Calu3 (cell line): ENCODE measurements at regions of chr6 and their contacts with region 1.

Region 1: GRCh38 chr6:50091641-50092040 is 41.9 kb upstream of the DEFB112 start:
- DNase-seq: no peak
- H3K4me3 Mint-ChIP-seq: no peak overlapping the region
- H3K27ac Mint-ChIP-seq: no peak overlapping the region
- H3K4me1 Mint-ChIP-seq: peaks cover 26% of the 10 kb centered on the region
- H3K27me3 Mint-ChIP-seq: no peaks in the 10 kb centered on the region
- CTCF ChIP-seq: no peak

Region 2: DNA sequence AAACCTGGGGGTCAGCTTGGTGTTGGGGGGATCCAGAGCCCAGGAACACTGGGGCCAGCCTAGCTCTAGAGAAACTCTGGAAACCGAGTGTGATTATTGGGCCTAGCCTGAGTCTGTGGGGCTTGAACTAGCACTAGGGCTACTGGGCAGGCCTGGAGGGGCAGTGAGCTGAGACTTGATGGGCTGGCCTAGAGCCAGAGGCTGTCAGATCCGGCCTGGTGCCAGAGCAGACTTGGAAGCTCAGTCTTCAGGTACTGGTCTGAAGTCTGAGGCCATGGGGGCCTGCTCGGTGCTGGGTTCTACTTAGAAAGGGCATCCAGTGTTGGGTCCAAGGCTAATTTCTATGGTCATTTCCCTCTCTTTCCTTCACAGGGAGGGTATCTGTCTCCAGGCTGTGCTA is 44.6 kb before region 1 on chr6:
- CTCF ChIA-PET with region 1: no interaction called
- intact Hi-C with region 1: loop called (anchors 2 kb)
- DNase-seq: no peak
- H3K4me3 Mint-ChIP-seq: no peak overlapping the region
- H3K27ac Mint-ChIP-seq: no peak overlapping the region
- H3K4me1 Mint-ChIP-seq: no peaks in the 10 kb centered on the region
- H3K27me3 Mint-ChIP-seq: no peaks in the 10 kb centered on the region
- CTCF ChIP-seq: no peak